ENCODE measurements at regions of chr12 and their contacts with region 1.

Region 1: GRCh38 chr12:109093022-109093918 is at the start of gene ALKBH2:
- DNase-seq: peak; percentile 96
- H3K4me3 Mint-ChIP-seq: peak within 1 kb of the TSS; percentile 85
- H3K27ac Mint-ChIP-seq: peak within 1 kb of the TSS; percentile 81
- H3K4me1 Mint-ChIP-seq: peaks cover 44% of the 10 kb centered on the region
- H3K27me3 Mint-ChIP-seq: no peaks in the 10 kb centered on the region
- total RNA-seq, gene ALKBH2: 31.1 to 32.7 TPM

Region 2: GRCh38 chr12:108633534-108634248 is 459.6 kb before region 1 on chr12 and contains the start of gene SELPLG:
- CTCF ChIA-PET with region 1: no interaction called
- intact Hi-C with region 1: loop called (anchors 1 kb)
- DNase-seq: peak; percentile 91
- H3K4me3 Mint-ChIP-seq: peak within 1 kb of the TSS; percentile 98
- H3K27ac Mint-ChIP-seq: peak within 1 kb of the TSS; percentile 100
- H3K4me1 Mint-ChIP-seq: peaks cover 53% of the 10 kb centered on the region
- H3K27me3 Mint-ChIP-seq: no peaks in the 10 kb centered on the region
- total RNA-seq, gene SELPLG: 19.9 to 21.9 TPM

Region 3: GRCh38 chr12:108803428-108804105 is 289.7 kb before region 1 on chr12:
- CTCF ChIA-PET with region 1: interaction called, 6 read pairs
- intact Hi-C with region 1: loop called (anchors 1 kb)
- DNase-seq: peak; percentile 83
- H3K4me3 Mint-ChIP-seq: no peak overlapping the region
- H3K27ac Mint-ChIP-seq: peak overlapping the region; percentile 76
- H3K4me1 Mint-ChIP-seq: peaks cover 7% of the 10 kb centered on the region
- H3K27me3 Mint-ChIP-seq: no peaks in the 10 kb centered on the region

Region 4: GRCh38 chr12:108884116-108885012 is 208.9 kb before region 1 on chr12:
- CTCF ChIA-PET with region 1: interaction called, 41 read pairs
- intact Hi-C with region 1: loop called (anchors 1 kb)
- DNase-seq: peak; percentile 84
- H3K4me3 Mint-ChIP-seq: no peak overlapping the region
- H3K27ac Mint-ChIP-seq: no peak overlapping the region
- H3K4me1 Mint-ChIP-seq: no peaks in the 10 kb centered on the region
- H3K27me3 Mint-ChIP-seq: no peaks in the 10 kb centered on the region

Region 5: DNA sequence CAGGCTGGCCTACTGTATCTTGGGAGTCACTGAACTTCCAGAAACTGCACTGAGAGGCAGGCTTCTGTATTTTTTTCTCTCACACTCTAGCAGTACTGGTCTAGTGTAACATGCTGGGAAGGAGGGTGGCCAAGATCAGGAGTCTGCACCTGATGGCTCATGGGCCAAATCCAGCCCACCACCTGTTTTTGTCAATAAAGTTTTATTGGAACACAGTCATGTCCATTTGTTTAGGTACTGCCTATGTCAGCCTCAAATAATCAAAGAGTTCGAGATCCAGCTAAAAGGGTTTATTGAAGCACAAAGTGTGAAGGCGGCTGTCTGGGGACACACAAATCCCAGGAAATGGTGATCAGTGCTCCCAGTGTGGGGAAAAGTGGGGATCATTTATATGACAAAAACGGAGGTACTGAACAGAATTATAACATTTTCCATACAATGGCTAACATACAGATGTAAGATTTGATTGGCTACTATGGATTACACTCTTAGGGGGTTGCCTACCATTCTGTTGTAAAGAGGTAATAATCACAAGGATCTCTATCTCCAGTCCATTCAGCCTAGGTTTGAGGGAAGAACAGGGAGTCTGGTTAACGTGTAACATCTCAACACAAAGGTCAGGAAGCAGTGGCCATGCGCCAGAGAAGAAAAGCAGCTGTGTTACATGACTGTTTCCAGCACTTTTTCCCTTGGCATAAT is 28.0 kb before region 1 on chr12:
- CTCF ChIA-PET with region 1: interaction called, 10 read pairs
- intact Hi-C with region 1: no loop called
- DNase-seq: no peak
- H3K4me3 Mint-ChIP-seq: no peak overlapping the region
- H3K27ac Mint-ChIP-seq: no peak overlapping the region
- H3K4me1 Mint-ChIP-seq: peaks cover 4% of the 10 kb centered on the region
- H3K27me3 Mint-ChIP-seq: no peaks in the 10 kb centered on the region